ENCODE measurements at regions of chr5 and their contacts with region 1.

Region 1: DNA sequence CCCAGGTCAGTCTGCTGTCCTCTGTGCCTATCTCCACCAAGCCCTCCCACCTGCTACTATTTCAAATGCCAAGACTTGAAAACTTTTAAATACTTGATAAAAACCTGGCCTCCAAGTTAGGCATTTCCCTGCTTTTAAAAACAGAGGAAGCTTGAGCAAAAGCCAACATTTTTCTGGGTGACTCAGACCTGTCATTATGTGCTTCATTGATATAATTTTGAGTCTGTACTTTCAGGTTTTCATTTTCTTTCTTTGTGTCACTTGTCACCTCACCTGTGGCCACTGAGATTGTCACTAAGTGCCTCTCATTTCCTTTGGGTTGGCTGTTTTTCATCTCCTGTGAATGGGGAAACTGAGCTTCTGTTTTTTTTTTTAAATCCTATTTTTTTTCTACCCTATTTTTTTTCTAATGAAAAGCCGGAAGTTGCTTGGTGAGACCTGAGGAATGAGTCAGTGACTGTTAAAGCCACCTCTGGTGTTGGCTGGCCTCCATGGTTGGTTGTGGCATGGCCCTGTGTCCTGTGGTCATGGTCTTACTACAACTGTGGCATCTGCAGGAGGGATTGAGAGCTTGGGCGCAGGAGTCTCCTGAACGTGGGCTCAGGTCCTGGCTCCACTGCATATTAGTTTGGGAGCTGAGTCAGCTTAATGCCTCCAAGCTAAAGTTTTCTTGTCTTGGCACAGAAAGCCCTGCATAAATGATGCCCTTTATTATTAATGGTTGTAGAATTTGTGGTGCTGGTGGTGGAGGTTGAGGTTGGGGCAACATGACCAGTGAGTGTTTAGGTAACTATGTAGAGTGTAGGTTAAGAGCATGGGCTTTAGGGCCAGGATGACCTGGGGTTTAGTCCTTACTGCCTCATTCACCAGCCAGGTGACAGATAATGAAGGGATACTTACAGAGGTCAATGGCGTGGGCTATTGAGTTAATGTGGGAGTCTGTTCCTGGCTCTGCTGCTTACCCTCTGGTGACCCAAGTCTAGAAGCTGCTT is 56.9 kb downstream of the ARHGAP26 start:
- DNase-seq: peak; percentile 66
- H3K4me3 Mint-ChIP-seq: peak overlapping the region; percentile 32
- H3K27ac Mint-ChIP-seq: peak overlapping the region; percentile 77
- H3K4me1 Mint-ChIP-seq: peaks cover 63% of the 10 kb centered on the region
- H3K27me3 Mint-ChIP-seq: peaks cover 1% of the 10 kb centered on the region

Region 2: DNA sequence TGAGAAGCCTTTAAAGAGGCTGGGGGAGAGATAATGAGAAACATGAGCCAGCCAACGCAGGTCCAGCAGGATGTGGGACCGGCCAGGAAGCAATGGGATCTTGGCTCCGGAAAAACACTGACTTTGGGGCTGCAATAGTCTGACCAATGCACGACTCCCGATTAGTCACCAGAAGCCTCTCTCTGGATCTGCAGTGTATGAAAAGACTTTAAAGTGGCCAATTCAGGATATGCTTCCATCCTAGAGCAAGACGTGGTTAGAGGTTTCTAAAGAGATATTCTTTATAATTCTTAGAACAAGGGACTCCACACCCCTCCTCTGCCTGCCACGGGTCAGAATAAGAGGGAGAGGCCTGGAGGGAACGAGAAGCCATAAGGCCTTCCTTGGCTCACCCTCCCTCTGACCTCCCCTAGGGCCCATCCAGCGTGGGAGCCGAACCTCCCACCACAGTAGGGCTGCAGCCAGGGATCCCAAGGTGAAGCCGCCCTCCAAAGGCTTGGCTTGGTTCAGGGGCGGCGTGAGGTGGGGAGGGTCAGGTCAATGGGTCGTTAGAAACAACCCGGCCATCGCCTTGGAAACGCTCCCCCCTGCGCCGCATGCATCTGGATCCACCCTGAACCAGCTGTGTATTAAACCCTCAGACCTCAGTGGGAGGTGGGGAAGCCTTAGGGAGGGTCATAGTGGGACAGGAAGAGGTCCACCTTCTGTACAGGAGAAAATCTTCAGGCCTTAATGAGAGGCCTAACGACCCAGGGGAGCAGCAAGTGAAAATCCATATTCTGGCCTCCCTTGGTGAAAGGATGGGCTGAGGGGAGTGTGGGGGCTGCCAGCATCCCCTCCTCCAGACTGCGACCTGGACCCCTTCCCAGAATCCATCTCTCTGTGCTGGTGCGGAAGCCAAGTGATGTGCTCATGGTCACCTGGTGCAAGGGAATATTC is 152.2 kb before region 1 on chr5:
- intact Hi-C with region 1: no loop called
- DNase-seq: no peak
- H3K4me3 Mint-ChIP-seq: no peak overlapping the region
- H3K27ac Mint-ChIP-seq: no peak overlapping the region
- H3K4me1 Mint-ChIP-seq: no peaks in the 10 kb centered on the region
- H3K27me3 Mint-ChIP-seq: peaks cover 9% of the 10 kb centered on the region

Region 3: DNA sequence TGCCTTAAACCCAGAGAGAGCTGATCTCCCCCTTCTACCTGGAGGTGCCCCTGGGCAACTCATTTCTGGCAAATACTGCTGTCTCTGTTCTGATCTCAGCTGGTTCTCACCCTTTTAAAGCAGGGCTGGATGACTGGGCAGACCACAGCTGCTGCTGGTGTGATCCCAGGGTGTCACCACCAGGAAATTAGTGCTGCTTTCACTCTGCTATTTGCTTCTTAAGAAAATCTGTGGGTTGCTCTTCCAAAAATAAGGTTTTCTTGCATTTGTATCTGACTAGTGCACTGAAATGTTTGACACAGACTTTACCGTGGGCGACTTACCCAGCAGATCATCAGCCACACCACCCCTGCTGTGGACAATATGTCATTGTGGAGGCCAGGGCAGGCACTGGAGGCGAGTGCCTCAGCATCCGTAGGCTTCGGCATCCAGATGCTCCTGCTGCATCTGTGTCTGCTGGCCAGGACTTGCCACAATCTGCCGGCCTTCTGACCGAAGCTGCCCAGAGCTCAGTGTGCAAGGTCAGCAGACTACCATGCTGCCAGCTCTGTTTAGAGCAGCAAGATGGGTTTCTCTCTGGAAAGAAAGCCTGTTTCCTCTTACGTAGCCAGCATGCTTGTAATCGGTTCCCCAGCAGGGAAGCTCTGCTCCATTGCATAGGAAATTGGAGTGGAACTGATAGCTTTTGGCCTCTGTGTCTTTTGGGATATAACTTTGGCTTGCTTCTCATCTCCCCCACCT is 43.3 kb before region 1 on chr5:
- intact Hi-C with region 1: loop called (anchors 1 kb)
- DNase-seq: peak; percentile 82
- H3K4me3 Mint-ChIP-seq: peak overlapping the region; percentile 5
- H3K27ac Mint-ChIP-seq: peak overlapping the region; percentile 71
- H3K4me1 Mint-ChIP-seq: peaks cover 40% of the 10 kb centered on the region
- H3K27me3 Mint-ChIP-seq: no peaks in the 10 kb centered on the region

Region 4: DNA sequence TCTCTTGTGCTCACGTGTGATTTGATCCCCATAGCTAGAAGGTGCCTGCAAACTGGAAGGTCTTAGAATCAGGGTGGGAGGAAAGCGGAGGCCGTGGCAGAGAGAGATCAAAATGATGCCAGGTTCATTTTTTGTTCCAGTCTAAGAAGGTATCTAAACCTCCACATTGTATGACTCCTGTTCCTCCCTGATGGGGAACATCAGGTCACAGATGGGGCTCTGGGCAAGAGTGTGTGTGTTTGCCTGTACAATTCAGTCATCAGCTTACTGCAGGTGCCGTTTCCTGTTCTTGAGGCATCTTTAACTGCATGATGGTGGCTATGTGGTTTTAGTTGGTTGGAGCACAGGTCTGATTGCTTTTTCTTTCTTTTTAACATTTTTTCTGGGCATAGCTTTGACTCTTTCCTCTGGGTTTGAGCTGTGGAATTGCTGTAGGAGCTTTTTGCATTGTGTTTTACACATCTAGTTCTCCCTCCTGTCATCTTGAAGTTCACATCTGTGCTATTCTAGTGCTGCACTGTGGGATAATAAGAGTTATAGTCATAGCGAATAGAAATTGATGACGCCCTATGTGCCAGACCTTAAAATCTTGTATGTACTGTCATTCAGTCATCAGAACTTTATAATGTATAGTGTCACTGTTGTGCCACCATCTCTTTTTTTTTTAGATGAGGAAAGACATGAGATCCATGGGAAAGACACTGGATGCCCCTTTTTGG is 26.1 kb before region 1 on chr5:
- intact Hi-C with region 1: loop called (anchors 1 kb)
- DNase-seq: peak; percentile 87
- H3K4me3 Mint-ChIP-seq: peak overlapping the region; percentile 79
- H3K27ac Mint-ChIP-seq: peak overlapping the region; percentile 92
- H3K4me1 Mint-ChIP-seq: peaks cover 54% of the 10 kb centered on the region
- H3K27me3 Mint-ChIP-seq: no peaks in the 10 kb centered on the region

Region 5: DNA sequence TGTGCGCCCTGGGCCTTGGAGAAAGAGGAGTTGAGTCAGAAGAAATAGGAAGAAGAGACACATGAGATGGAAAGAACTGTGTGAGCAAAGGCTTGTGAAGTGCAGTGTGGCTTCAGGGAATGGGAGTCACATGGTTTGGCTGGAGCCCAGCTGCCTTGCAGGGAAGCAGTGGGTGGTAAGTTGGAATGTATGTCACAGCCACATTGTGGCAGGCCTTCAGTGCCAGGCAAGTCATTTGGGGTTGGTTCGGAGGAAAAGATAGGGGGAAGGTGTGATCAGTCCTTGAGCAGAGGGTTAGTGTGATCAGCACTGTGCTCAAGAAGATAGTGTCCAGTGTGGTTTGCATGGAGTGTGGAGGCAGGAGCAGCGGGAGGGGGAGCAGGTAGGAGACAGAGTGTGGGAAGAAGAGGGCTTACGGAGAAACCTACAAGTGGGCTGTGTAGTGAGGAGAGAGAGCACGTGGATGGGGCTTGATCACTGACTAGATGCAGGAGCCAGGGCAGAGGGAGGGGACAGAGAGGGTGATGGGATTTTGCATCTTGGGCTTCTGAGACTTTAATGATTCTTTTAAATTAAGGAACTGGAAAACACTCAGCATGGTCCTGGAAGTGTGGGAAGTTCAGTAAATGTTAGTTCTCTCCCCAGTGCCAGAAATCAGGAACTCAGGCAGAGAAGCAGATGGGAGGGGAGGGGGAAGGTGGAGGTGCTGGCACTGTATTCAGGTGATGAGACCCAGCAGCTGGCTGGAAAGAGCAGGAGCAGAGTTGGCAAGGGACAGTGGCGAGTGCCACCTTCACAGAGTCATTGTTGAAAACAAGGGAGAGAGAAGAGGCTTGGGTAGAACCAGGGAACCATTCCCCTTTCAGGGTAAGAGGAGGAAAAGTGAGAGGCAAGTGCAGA is 10.3 kb before region 1 on chr5:
- intact Hi-C with region 1: no loop called
- DNase-seq: no peak
- H3K4me3 Mint-ChIP-seq: no peak overlapping the region
- H3K27ac Mint-ChIP-seq: no peak overlapping the region
- H3K4me1 Mint-ChIP-seq: peaks cover 29% of the 10 kb centered on the region
- H3K27me3 Mint-ChIP-seq: no peaks in the 10 kb centered on the region

Region 6: DNA sequence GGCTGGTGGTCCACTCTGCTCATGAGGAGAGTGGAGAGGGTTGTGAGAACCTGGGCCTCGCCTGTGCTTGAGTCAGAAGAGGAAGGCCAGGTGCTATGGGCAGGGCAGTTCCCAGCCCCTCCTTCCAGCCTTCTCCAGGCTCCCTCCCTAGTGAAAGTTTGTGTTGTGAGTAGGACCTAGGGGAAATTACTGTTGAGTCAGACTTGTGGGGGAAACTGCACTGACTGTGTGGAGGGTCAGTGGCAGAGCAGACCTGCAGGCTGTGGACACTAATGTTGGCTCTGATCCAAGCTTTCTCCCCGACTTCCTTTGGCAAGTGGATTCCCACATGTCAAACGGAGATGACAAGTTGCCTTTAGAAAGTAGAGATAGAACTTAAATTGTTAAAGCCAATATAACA is 45.8 kb after region 1 on chr5:
- intact Hi-C with region 1: loop called (anchors 1 kb)
- DNase-seq: no peak
- H3K4me3 Mint-ChIP-seq: no peak overlapping the region
- H3K27ac Mint-ChIP-seq: no peak overlapping the region
- H3K4me1 Mint-ChIP-seq: peaks cover 3% of the 10 kb centered on the region
- H3K27me3 Mint-ChIP-seq: no peaks in the 10 kb centered on the region